HCT116 (cell line): ENCODE measurements at regions of chr18 and their contacts with region 1.

Region 1: DNA sequence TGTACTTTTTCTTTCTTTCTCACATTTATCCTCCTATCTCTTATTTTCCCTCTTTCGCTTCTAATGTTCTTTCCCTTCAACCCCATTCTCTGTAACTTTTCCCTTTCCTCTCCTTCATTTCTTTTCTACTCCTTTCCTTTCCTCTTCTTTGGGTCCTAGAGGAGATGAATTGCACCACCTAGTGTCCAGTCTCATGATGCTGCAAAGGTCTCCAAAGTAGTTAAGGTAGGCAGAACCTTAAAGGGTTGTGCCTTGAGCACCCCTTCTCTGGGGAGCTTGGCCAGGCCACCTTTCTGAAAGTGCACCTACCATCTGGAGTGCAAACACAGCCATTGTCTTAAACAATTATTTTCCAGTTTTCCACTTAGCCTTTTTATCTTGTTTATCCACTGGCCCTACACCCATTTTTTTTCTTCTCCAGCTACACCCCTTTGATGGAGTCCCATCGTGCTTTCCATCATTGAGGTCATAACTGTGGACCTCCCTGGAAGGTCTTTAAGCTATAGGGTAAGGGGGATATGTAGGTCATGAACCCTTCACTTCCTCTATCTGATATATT is 156.0 kb downstream of the ESCO1 start:
- DNase-seq: peak; percentile 64
- ATAC-seq: peak; percentile 92
- H3K4me3 ChIP-seq: no peak overlapping the region
- H3K27ac ChIP-seq: no peak overlapping the region
- H3K4me1 ChIP-seq: peaks cover 0 to under 1% of the 10 kb centered on the region in 2 experiments; a peak in 1 of 4 replicates
- H3K27me3 ChIP-seq: no peaks in the 10 kb centered on the region
- CTCF ChIP-seq: peak; percentile 74 to 87 (median 87)
- POLR2A ChIP-seq: no peak
- RAD21 ChIP-seq: peak; percentile 86

Region 2: GRCh38 chr18:21242141-21242779 is 202.3 kb before region 1 on chr18 and contains the start of gene GREB1L:
- CTCF ChIA-PET with region 1: no interaction called
- POLR2A ChIA-PET with region 1: no interaction called
- RAD21 ChIA-PET with region 1: no interaction called
- intact Hi-C with region 1: loop called (anchors 5 kb)
- DNase-seq: peak; percentile 27
- ATAC-seq: peak; percentile 93
- H3K4me3 ChIP-seq: peak within 1 kb of the TSS; percentile 54 to 87
- H3K27ac ChIP-seq: peak within 1 kb of the TSS; percentile 66; the same call in 1 of the 2 replicates
- H3K4me1 ChIP-seq: peaks cover 2 to 24% of the 10 kb centered on the region in 2 experiments; a peak in 3 of 4 replicates
- H3K27me3 ChIP-seq: no peaks in the 10 kb centered on the region
- CTCF ChIP-seq: 0 out of 6 replicates have a peak, but pooled peaks of 2 of the 3 experiments have one; percentile 15 to 27
- POLR2A ChIP-seq: peak; percentile 50
- RAD21 ChIP-seq: peak; percentile 50; the same call in 1 of the 2 replicates
- total RNA-seq, gene GREB1L: 12.2 TPM

Region 3: GRCh38 chr18:21303913-21304312 is 140.6 kb before region 1 on chr18:
- CTCF ChIA-PET with region 1: no interaction called
- POLR2A ChIA-PET with region 1: no interaction called
- RAD21 ChIA-PET with region 1: no interaction called
- intact Hi-C with region 1: no loop called
- DNase-seq: peak; percentile 72
- ATAC-seq: peak; percentile 88
- H3K4me3 ChIP-seq: peak overlapping the region in 1 of 2 experiments; percentile 21; a peak in 1 of 4 replicates
- H3K27ac ChIP-seq: peak overlapping the region; percentile 54; the same call in 1 of the 2 replicates
- H3K4me1 ChIP-seq: peaks cover 16 to 84% of the 10 kb centered on the region in 2 experiments; a peak in 3 of 4 replicates
- H3K27me3 ChIP-seq: no peaks in the 10 kb centered on the region
- CTCF ChIP-seq: no peak
- POLR2A ChIP-seq: no peak
- RAD21 ChIP-seq: no peak

Region 4: GRCh38 chr18:21433436-21433835 is 11.1 kb before region 1 on chr18:
- CTCF ChIA-PET with region 1: no interaction called
- POLR2A ChIA-PET with region 1: no interaction called
- RAD21 ChIA-PET with region 1: no interaction called
- intact Hi-C with region 1: no loop called
- DNase-seq: no peak
- ATAC-seq: no peak
- H3K4me3 ChIP-seq: no peak overlapping the region
- H3K27ac ChIP-seq: no peak overlapping the region
- H3K4me1 ChIP-seq: no peaks in the 10 kb centered on the region
- H3K27me3 ChIP-seq: no peaks in the 10 kb centered on the region
- CTCF ChIP-seq: no peak
- POLR2A ChIP-seq: no peak
- RAD21 ChIP-seq: no peak